ENCODE measurements at regions of chr2 and their contacts with region 1.

Region 1: GRCh38 chr2:37389989-37390765 is 45.7 kb downstream of the QPCT start:
- DNase-seq: peak; percentile 76
- H3K4me3 Mint-ChIP-seq: peak overlapping the region; percentile 12
- H3K27ac Mint-ChIP-seq: peak overlapping the region; percentile 63
- H3K4me1 Mint-ChIP-seq: no peaks in the 10 kb centered on the region
- H3K27me3 Mint-ChIP-seq: no peaks in the 10 kb centered on the region
- CTCF ChIP-seq: no peak

Region 2: GRCh38 chr2:36762764-36763490 is 627.2 kb before region 1 on chr2:
- CTCF ChIA-PET with region 1: no interaction called
- intact Hi-C with region 1: no loop called
- DNase-seq: no peak
- H3K4me3 Mint-ChIP-seq: no peak overlapping the region
- H3K27ac Mint-ChIP-seq: no peak overlapping the region
- H3K4me1 Mint-ChIP-seq: no peaks in the 10 kb centered on the region
- H3K27me3 Mint-ChIP-seq: peaks cover 14% of the 10 kb centered on the region
- CTCF ChIP-seq: no peak

Region 3: GRCh38 chr2:37324786-37325624 is 65.2 kb before region 1 on chr2 and contains the start of gene PRKD3:
- CTCF ChIA-PET with region 1: no interaction called
- intact Hi-C with region 1: loop called (anchors 1 kb)
- DNase-seq: peak; percentile 59
- H3K4me3 Mint-ChIP-seq: peak within 1 kb of the TSS; percentile 81
- H3K27ac Mint-ChIP-seq: peak within 1 kb of the TSS; percentile 89
- H3K4me1 Mint-ChIP-seq: peaks cover 26% of the 10 kb centered on the region
- H3K27me3 Mint-ChIP-seq: peaks cover 9% of the 10 kb centered on the region
- CTCF ChIP-seq: no peak
- total RNA-seq, gene PRKD3: 24.8 and 33.4 TPM in 2 replicates

Region 4: DNA sequence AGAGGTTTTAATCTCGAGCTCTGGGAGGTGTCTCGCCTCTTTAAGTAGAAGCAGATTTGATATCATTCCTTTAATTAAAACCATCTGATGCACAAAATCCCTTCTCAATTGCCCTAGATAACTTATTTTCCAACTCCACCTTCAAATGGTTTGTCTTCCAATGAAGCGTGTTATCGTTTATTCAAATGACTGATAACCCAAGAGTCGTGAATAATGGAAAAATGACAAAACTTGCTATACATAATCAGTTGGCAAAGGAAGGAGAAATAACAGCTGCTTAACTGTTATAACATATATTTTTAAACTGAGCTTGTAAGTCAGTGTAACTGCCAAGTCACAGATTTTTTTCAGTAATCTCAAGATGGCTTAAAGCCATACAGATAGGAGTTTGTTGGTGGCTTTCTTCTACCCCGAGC is 98.9 kb after region 1 on chr2:
- CTCF ChIA-PET with region 1: no interaction called
- intact Hi-C with region 1: no loop called
- DNase-seq: no peak
- H3K4me3 Mint-ChIP-seq: no peak overlapping the region
- H3K27ac Mint-ChIP-seq: no peak overlapping the region
- H3K4me1 Mint-ChIP-seq: no peaks in the 10 kb centered on the region
- H3K27me3 Mint-ChIP-seq: peaks cover 24% of the 10 kb centered on the region
- CTCF ChIP-seq: no peak

Region 5: GRCh38 chr2:37982147-37982582 is 592.0 kb after region 1 on chr2:
- CTCF ChIA-PET with region 1: no interaction called
- intact Hi-C with region 1: loop called (anchors 5 kb)
- DNase-seq: peak; percentile 77
- H3K4me3 Mint-ChIP-seq: no peak overlapping the region
- H3K27ac Mint-ChIP-seq: no peak overlapping the region
- H3K4me1 Mint-ChIP-seq: peaks cover 8% of the 10 kb centered on the region
- H3K27me3 Mint-ChIP-seq: no peaks in the 10 kb centered on the region
- CTCF ChIP-seq: peak; percentile 80